ENCODE measurements at regions of chr6 and their contacts with region 1.

Region 1: GRCh38 chr6:5174244-5174643 is 86.5 kb downstream of the LYRM4 start:
- DNase-seq: peak; percentile 62
- H3K4me3 Mint-ChIP-seq: peak overlapping the region; percentile 68
- H3K27ac Mint-ChIP-seq: peak overlapping the region; percentile 85
- H3K4me1 Mint-ChIP-seq: peaks cover 36% of the 10 kb centered on the region
- H3K27me3 Mint-ChIP-seq: no peaks in the 10 kb centered on the region

Region 2: GRCh38 chr6:4743062-4743461 is 431.2 kb before region 1 on chr6:
- intact Hi-C with region 1: no loop called
- DNase-seq: no peak
- H3K4me3 Mint-ChIP-seq: no peak overlapping the region
- H3K27ac Mint-ChIP-seq: no peak overlapping the region
- H3K4me1 Mint-ChIP-seq: no peaks in the 10 kb centered on the region
- H3K27me3 Mint-ChIP-seq: peaks cover 15% of the 10 kb centered on the region

Region 3: DNA sequence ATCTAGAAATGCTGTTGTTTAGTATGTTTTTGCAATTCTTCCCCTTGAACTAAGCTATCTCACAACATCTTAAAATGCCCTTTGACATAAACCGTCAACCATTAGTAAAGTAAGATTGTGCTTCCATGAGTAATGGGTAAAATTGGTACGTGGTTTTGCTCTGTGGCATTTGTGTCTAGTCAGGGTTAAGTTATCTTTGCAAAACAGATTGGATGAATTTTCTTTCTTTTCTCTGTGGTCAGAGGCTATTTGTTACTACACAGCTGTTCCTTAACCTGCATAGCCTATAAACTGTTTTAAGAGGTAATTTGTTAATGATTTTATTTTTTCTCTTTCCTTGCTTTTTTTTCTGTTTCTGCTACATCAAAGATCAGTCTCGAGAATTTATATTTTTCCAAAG is 245.8 kb before region 1 on chr6:
- intact Hi-C with region 1: no loop called
- DNase-seq: no peak
- H3K4me3 Mint-ChIP-seq: no peak overlapping the region
- H3K27ac Mint-ChIP-seq: no peak overlapping the region
- H3K4me1 Mint-ChIP-seq: peaks cover 33% of the 10 kb centered on the region
- H3K27me3 Mint-ChIP-seq: no peaks in the 10 kb centered on the region

Region 4: DNA sequence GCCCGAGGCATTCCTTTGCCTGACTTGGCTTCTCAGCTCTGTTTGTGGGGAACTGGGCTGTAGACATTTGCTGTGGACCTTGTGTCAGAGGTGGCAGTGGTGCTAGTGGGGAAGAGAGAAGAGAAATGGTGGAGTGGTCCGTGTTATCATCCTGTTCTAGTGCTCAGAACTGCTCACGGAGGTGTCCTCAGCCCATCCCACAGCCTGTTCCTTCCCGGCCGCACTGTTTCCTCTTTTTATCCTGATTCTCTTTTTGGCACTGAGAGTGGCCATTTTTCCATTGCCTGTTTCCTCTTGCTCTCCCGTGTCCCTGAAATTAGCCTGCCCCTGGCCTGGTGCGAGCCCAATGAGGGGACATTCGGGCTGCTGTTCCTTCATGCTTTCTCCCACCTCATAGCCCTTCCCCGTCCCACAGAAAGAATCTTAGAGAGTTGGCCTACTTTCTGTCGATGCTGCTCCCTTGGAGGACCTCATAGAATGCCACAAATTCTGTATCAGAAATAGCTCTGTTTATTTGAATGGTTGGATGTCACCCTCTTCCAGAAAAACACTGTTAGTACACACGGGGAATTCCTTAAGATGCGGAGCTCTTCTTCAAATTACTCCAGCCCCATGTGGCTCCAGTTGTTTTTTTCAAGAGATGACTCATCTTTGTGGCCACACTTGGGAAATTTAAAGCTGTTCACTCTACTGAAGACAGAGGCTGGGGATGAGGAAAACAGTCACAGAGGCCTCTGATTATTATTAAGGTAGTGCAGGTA is 113.1 kb after region 1 on chr6:
- intact Hi-C with region 1: loop called (anchors 10 kb)
- DNase-seq: no peak
- H3K4me3 Mint-ChIP-seq: no peak overlapping the region
- H3K27ac Mint-ChIP-seq: no peak overlapping the region
- H3K4me1 Mint-ChIP-seq: peaks cover 40% of the 10 kb centered on the region
- H3K27me3 Mint-ChIP-seq: no peaks in the 10 kb centered on the region

Region 5: DNA sequence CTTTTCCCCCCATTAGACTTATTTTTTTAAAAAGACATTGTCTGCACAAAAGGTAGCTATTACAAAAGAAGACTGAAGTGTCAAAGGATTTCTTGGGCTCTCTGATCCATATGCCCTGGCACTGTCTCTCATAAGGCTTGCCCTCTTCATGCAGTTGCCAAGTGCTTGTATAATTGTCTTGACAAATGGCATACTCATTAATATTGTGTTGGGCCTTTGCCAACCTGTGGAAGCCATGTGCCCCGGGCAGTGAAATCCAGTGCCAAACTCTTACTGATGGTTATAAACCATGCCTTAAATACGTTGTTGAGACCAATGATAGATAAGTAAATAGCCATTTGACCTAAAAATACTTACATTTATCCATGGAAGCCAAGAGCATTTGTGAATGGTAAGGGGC is 185.2 kb after region 1 on chr6:
- intact Hi-C with region 1: no loop called
- DNase-seq: no peak
- H3K4me3 Mint-ChIP-seq: no peak overlapping the region
- H3K27ac Mint-ChIP-seq: no peak overlapping the region
- H3K4me1 Mint-ChIP-seq: no peaks in the 10 kb centered on the region
- H3K27me3 Mint-ChIP-seq: no peaks in the 10 kb centered on the region

Measured in activated T-helper 2 cell treated with anti-CD3 and anti-CD28 coated beads, Interferon-gamma antibody, Interleukin-2, Interleukin-4, amounts not matched to agents 10 μg/mL and 5 μg/mL and 100 μg/mL, durations not matched to agents 14 hours and 24 hours and 36 hours (primary cell).